B cell (primary cell): ENCODE measurements at regions of chr6 and their contacts with region 1.

Region 1: DNA sequence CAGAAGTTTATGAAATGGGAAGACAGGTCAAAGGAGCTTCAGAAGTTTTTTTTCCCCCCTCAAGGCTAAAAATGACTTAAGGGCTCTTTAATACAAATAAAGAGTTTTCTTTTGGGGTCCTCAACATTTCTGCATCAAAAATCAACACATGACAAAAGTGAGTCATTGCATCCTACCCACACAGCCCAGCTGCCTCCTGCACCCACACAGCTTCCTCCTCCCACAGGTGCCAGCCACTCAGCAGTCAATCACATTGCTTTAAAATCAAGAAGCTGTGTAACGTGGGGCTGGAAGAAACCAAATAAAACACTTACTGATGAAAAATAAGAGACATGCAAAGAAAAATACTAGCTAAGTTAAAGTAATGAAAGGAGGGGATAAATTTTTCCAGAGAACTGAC is 68.5 kb downstream of the MAP3K5 start:
- DNase-seq: peak; percentile 57
- ATAC-seq: peak; percentile 94
- H3K4me3 ChIP-seq: no peak overlapping the region
- H3K4me3 Mint-ChIP-seq: peak overlapping the region; percentile 50
- H3K27ac ChIP-seq: peak overlapping the region in 1 of 2 donors; percentile 20
- H3K27ac Mint-ChIP-seq: peak overlapping the region; percentile 47
- H3K4me1 ChIP-seq: peaks cover 29 to 31% of the 10 kb centered on the region in 2 donors
- H3K4me1 Mint-ChIP-seq: peaks cover 48% of the 10 kb centered on the region
- H3K27me3 ChIP-seq: no peaks in the 10 kb centered on the region
- H3K27me3 Mint-ChIP-seq: no peaks in the 10 kb centered on the region
- CTCF ChIP-seq: no peak

Region 2: GRCh38 chr6:136599329-136600011 is 124.3 kb before region 1 on chr6:
- CTCF ChIA-PET with region 1: no interaction called
- POLR2A ChIA-PET with region 1: no interaction called
- intact Hi-C with region 1: no loop called
- DNase-seq: no peak
- ATAC-seq: no peak
- H3K4me3 ChIP-seq: no peak overlapping the region
- H3K4me3 Mint-ChIP-seq: no peak overlapping the region
- H3K27ac ChIP-seq: no peak overlapping the region
- H3K27ac Mint-ChIP-seq: no peak overlapping the region
- H3K4me1 ChIP-seq: peaks cover 7 to 10% of the 10 kb centered on the region in 2 donors
- H3K4me1 Mint-ChIP-seq: peaks cover 9% of the 10 kb centered on the region
- H3K27me3 ChIP-seq: no peaks in the 10 kb centered on the region
- H3K27me3 Mint-ChIP-seq: no peaks in the 10 kb centered on the region
- CTCF ChIP-seq: no peak

Region 3: GRCh38 chr6:136761227-136761922 is 37.6 kb after region 1 on chr6:
- CTCF ChIA-PET with region 1: interaction called, 4 read pairs
- POLR2A ChIA-PET with region 1: no interaction called
- intact Hi-C with region 1: loop called (anchors 5 kb)
- DNase-seq: peak; percentile 21
- ATAC-seq: peak; percentile 22
- H3K4me3 ChIP-seq: peak overlapping the region; percentile 3 to 53 (median 19)
- H3K4me3 Mint-ChIP-seq: peak overlapping the region; percentile 74
- H3K27ac ChIP-seq: peak overlapping the region; percentile 84 to 91
- H3K27ac Mint-ChIP-seq: peak overlapping the region; percentile 85
- H3K4me1 ChIP-seq: peaks cover 61% of the 10 kb centered on the region in 2 donors
- H3K4me1 Mint-ChIP-seq: peaks cover 67% of the 10 kb centered on the region
- H3K27me3 ChIP-seq: no peaks in the 10 kb centered on the region
- H3K27me3 Mint-ChIP-seq: no peaks in the 10 kb centered on the region
- CTCF ChIP-seq: no peak

Region 4: DNA sequence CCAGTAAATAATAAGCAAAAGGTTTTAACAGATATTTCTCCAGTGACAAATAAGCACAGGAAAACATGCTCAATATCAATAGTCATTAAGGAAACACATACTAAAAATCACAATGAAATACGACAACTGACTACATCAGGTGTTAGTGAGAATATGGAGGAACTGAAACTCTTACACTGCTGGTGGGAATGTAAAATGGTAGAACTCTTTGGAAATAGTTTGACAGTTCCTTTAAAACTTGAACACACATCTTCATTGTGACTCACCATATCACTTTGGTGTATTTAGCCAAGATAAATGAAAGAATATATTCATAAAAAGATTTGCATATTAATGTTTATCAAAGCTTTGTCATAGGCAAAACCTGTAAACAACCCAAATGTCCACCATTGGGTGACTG is 79.8 kb after region 1 on chr6:
- CTCF ChIA-PET with region 1: no interaction called
- POLR2A ChIA-PET with region 1: no interaction called
- intact Hi-C with region 1: no loop called
- DNase-seq: no peak
- ATAC-seq: no peak
- H3K4me3 ChIP-seq: no peak overlapping the region
- H3K4me3 Mint-ChIP-seq: no peak overlapping the region
- H3K27ac ChIP-seq: no peak overlapping the region
- H3K27ac Mint-ChIP-seq: no peak overlapping the region
- H3K4me1 ChIP-seq: no peaks in the 10 kb centered on the region
- H3K4me1 Mint-ChIP-seq: no peaks in the 10 kb centered on the region
- H3K27me3 ChIP-seq: peaks cover 0 to 5% (median 0%) of the 10 kb centered on the region in 4 experiments
- H3K27me3 Mint-ChIP-seq: peaks cover 3% of the 10 kb centered on the region
- CTCF ChIP-seq: no peak